ENCODE measurements at regions of chr15 and their contacts with region 1.

Region 1: GRCh38 chr15:48250640-48251076 is 44.6 kb downstream of the SLC12A1 start:
- DNase-seq: no peak
- H3K4me3 ChIP-seq: no peak overlapping the region
- H3K27ac ChIP-seq: no peak overlapping the region
- H3K4me1 ChIP-seq: no peaks in the 10 kb centered on the region
- H3K27me3 ChIP-seq: no peaks in the 10 kb centered on the region
- CTCF ChIP-seq: peak in 2 of 3 donors; percentile 58 to 64
- POLR2A ChIP-seq: no peak

Region 2: GRCh38 chr15:48017747-48018146 is 232.9 kb before region 1 on chr15:
- intact Hi-C with region 1: loop called (anchors 5 kb)
- DNase-seq: no peak
- H3K4me3 ChIP-seq: no peak overlapping the region
- H3K27ac ChIP-seq: no peak overlapping the region
- H3K4me1 ChIP-seq: no peaks in the 10 kb centered on the region
- H3K27me3 ChIP-seq: no peaks in the 10 kb centered on the region
- CTCF ChIP-seq: no peak
- POLR2A ChIP-seq: no peak

Region 3: DNA sequence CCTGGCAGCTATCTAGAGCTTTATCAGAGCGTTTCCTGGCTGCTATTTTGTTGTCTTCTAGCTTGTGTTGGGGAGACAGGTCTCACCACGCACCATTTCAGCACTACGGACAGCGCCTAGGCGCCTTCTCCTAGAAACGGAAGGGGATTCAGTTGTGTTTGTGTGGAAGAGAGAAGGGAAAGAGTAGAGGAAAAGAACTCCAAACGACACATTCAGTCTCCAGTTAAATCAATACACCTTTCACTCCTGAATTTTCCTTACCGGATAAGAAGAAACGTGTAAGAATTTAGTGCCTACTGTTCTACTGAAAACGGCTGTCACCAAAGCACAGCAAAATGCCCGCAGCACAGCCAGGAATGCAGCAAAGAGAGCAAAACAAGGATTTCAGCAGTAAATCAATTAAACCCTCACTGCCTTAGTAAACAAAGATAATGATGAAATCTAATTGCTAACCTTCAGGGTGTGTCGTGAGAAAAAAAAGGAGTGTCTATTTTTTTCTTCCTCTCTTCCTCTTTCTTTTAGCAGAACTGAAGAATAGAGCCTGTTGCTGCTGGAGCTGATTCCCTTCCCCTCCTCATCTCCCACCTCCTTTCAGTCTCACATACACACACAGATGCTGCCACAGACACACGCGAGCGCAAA is 59.6 kb before region 1 on chr15:
- intact Hi-C with region 1: no loop called
- DNase-seq: peak in 1 of 2 donors; percentile 53
- H3K4me3 ChIP-seq: no peak overlapping the region
- H3K27ac ChIP-seq: no peak overlapping the region
- H3K4me1 ChIP-seq: no peaks in the 10 kb centered on the region
- H3K27me3 ChIP-seq: peaks cover 0 to 18% of the 10 kb centered on the region in 2 donors
- CTCF ChIP-seq: no peak
- POLR2A ChIP-seq: no peak

Region 4: GRCh38 chr15:48205981-48206380 is 44.7 kb before region 1 on chr15 and contains the start of gene SLC12A1:
- intact Hi-C with region 1: loop called (anchors 2 kb)
- DNase-seq: no peak
- H3K4me3 ChIP-seq: no peak within 1 kb of the TSS
- H3K27ac ChIP-seq: no peak within 1 kb of the TSS
- H3K4me1 ChIP-seq: no peaks in the 10 kb centered on the region
- H3K27me3 ChIP-seq: no peaks in the 10 kb centered on the region
- CTCF ChIP-seq: no peak
- POLR2A ChIP-seq: no peak
- total RNA-seq, gene SLC12A1: under 0.01 TPM in 1 of 3 donors, not detected in the others